ENCODE measurements at regions of chr16 and their contacts with region 1.

Region 1: DNA sequence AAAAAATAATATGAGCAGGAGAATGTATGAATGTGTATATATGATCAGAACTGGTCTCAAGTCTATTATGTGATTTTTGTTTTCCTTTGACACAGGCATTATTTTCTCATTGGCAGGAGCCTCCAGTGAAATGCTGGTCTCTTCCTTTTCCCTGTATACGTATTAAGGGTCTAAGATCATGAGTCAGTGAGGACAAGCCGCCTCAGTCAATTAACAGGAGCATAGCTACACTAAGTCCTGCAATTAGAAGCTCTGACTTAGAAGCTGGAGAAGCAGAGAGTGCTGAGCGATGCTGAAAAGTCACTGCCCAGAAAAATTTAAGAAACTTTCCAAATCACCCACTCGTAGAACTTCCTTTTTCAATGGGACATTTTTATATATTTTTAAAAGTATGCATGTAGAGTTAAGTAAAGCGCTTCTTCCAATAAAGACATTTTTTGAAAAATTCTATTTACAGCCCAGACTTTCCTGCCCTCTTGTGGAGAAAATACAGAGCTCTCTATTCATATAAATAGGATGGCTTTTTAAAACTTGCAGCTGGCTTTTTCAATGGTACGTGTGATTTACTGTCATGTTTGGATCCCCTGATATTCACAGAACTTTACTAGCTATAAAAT is 70.2 kb upstream of the PSMD7 start:
- DNase-seq: peak; percentile 14
- H3K4me3 Mint-ChIP-seq: no peak overlapping the region
- H3K27ac Mint-ChIP-seq: no peak overlapping the region
- H3K4me1 Mint-ChIP-seq: no peaks in the 10 kb centered on the region
- H3K27me3 Mint-ChIP-seq: peaks cover 49% of the 10 kb centered on the region
- CTCF ChIP-seq: peak; percentile 54

Region 2: DNA sequence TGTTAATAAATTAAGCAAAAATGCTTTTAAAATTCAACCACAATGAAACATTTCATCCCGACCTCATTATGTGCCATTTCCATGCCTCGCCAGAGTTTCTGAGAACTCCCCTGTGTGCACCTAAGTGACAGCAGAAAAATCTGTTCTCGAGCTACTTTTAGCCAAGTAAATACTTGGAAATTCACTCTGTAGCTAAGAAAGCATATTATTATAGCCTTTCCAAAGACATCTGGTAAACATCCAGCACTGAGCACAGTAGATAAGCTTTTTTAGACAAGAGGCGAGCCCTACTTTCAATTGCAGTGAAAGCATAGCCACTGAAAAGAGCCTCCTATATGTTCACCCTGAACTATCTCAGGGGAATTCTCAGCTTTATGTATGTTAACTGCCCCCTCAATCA is 172.6 kb before region 1 on chr16:
- CTCF ChIA-PET with region 1: no interaction called
- POLR2A ChIA-PET with region 1: no interaction called
- intact Hi-C with region 1: no loop called
- DNase-seq: no peak
- H3K4me3 Mint-ChIP-seq: no peak overlapping the region
- H3K27ac Mint-ChIP-seq: no peak overlapping the region
- H3K4me1 Mint-ChIP-seq: peaks cover 5% of the 10 kb centered on the region
- H3K27me3 Mint-ChIP-seq: peaks cover 60% of the 10 kb centered on the region
- CTCF ChIP-seq: no peak

Region 3: DNA sequence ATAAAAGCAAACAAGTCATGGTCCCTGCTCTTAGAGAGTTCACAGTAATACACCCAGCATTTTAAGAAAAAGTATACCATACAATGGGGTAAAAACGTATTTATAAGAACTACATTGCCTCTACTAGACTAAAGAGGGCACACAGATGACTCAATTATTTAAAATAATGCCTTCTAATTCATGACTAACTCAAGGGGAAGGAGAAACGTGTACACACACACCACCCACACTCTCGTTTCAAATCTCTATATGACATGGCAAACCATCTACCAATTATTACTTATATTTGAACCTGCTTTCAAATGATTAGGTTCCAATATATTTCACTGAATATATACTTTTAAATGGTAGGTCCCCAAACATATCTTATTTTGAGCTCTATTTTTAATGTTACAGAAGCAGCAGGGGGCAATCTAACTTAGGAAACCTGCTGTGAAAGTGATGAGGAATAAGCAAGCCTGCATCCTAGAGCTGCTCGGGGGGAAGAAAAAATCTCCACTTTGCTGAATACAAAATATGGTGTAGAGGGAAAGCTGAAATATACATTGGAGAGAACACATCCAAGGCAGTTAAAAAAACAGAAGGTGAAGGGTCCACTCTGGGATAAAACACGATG is 162.2 kb before region 1 on chr16:
- CTCF ChIA-PET with region 1: interaction called, 20 read pairs
- POLR2A ChIA-PET with region 1: no interaction called
- intact Hi-C with region 1: loop called (anchors 1 kb)
- DNase-seq: no peak
- H3K4me3 Mint-ChIP-seq: no peak overlapping the region
- H3K27ac Mint-ChIP-seq: no peak overlapping the region
- H3K4me1 Mint-ChIP-seq: no peaks in the 10 kb centered on the region
- H3K27me3 Mint-ChIP-seq: peaks cover 89% of the 10 kb centered on the region
- CTCF ChIP-seq: peak; percentile 12

Measured in MCF 10A (cell line).